ENCODE measurements at regions of chr21 and their contacts with region 1.

Region 1: GRCh38 chr21:25561668-25562641 is 45.3 kb downstream of the MRPL39 start:
- DNase-seq: peak; percentile 82
- H3K4me3 ChIP-seq: peak overlapping the region; percentile 62 to 97 (median 96)
- H3K27ac ChIP-seq: peak overlapping the region; percentile 89
- H3K4me1 ChIP-seq: peaks cover 27% of the 10 kb centered on the region
- H3K27me3 ChIP-seq: no peaks in the 10 kb centered on the region
- CTCF ChIP-seq: peak in 1 of 2 donors; percentile 36
- POLR2A ChIP-seq: peak; percentile 82

Region 2: GRCh38 chr21:24988941-24989340 is 573.0 kb before region 1 on chr21:
- CTCF ChIA-PET with region 1: no interaction called
- POLR2A ChIA-PET with region 1: no interaction called
- dilution Hi-C with region 1: no loop called
- intact Hi-C with region 1: no loop called
- DNase-seq: no peak
- H3K4me3 ChIP-seq: no peak overlapping the region
- H3K27ac ChIP-seq: no peak overlapping the region
- H3K4me1 ChIP-seq: no peaks in the 10 kb centered on the region
- H3K27me3 ChIP-seq: no peaks in the 10 kb centered on the region
- CTCF ChIP-seq: no peak
- POLR2A ChIP-seq: no peak

Region 3: DNA sequence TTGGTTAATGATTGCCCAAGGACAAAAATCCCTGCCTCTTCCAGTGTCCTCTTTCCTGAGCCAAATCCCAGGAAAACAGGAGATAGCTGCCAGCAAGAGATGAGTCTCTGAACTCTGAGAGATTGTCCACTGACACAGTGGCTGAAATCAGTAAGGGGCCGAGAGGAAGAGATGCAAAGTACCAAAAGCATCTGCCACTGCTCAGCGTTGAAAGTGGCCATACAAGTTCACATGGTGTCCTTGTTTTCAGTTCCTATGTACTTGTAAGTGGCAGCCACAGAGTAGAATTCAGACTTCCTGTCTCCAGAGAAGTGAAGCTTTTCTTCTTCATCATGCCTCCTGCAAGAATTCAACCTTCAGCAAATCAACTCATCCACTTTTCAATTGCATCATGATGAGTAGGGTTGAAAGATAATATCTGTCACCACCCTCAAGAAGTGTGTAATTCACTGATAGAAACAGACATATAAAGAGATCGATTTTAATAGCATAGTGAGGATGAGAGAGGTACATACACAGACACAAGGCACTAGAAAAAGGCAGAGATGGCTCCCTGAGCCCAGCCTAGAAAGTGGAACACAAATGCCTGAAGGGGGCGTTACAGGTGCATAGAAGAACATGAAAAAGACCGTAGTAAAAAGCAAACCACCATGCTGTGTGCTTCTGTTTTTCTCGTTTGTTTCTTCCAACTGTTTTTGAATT is 140.5 kb before region 1 on chr21:
- CTCF ChIA-PET with region 1: interaction called, 3 read pairs
- POLR2A ChIA-PET with region 1: no interaction called
- dilution Hi-C with region 1: no loop called
- intact Hi-C with region 1: loop called (anchors 1 kb)
- DNase-seq: peak; percentile 60
- H3K4me3 ChIP-seq: no peak overlapping the region
- H3K27ac ChIP-seq: no peak overlapping the region
- H3K4me1 ChIP-seq: no peaks in the 10 kb centered on the region
- H3K27me3 ChIP-seq: no peaks in the 10 kb centered on the region
- CTCF ChIP-seq: peak; percentile 29 to 59
- POLR2A ChIP-seq: no peak

Region 4: GRCh38 chr21:25457411-25457810 is 104.5 kb before region 1 on chr21:
- CTCF ChIA-PET with region 1: no interaction called
- POLR2A ChIA-PET with region 1: no interaction called
- dilution Hi-C with region 1: no loop called
- intact Hi-C with region 1: loop called (anchors 2 kb)
- DNase-seq: peak; percentile 81
- H3K4me3 ChIP-seq: peak overlapping the region in 1 of 3 experiments; percentile 33
- H3K27ac ChIP-seq: peak overlapping the region; percentile 18
- H3K4me1 ChIP-seq: peaks cover 6% of the 10 kb centered on the region
- H3K27me3 ChIP-seq: no peaks in the 10 kb centered on the region
- CTCF ChIP-seq: no peak
- POLR2A ChIP-seq: no peak

Region 5: DNA sequence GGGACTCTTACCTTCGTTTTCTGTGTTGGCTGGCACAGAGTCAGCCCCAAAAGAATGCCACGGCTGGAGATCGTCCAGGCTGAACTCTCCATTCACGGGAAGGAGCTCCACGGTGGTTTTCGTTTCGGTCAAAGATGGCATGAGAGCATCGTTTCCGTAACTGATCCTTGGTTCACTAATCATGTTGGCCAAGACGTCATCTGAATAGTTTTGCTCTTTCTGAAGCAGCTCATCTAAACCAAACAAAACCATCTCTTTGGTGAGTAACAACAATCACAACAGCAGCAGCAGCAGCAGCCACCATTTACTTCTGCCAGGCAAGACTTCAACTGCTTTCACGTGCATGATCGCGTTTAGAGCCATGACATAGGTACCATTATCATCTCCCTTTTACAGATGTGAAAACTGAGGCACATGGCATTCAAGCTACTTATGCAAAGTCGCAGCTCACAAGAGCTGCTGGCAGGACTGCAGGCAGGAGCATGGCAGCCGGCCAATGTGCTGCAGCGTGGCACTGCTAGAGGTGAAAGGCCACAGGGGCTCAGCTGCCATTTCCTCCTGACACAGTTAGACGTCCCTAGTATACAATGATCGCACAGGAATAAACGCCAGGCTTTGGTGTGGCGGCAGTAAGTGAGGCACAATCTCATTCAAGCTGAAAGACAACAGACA is 349.9 kb after region 1 on chr21:
- CTCF ChIA-PET with region 1: no interaction called
- POLR2A ChIA-PET with region 1: no interaction called
- dilution Hi-C with region 1: no loop called
- intact Hi-C with region 1: no loop called
- DNase-seq: peak; percentile 69
- H3K4me3 ChIP-seq: no peak overlapping the region
- H3K27ac ChIP-seq: no peak overlapping the region
- H3K4me1 ChIP-seq: peaks cover 34% of the 10 kb centered on the region
- H3K27me3 ChIP-seq: no peaks in the 10 kb centered on the region
- CTCF ChIP-seq: no peak
- POLR2A ChIP-seq: no peak

Region 6: GRCh38 chr21:26320596-26320995 is 758.6 kb after region 1 on chr21:
- CTCF ChIA-PET with region 1: no interaction called
- POLR2A ChIA-PET with region 1: no interaction called
- dilution Hi-C with region 1: no loop called
- intact Hi-C with region 1: no loop called
- DNase-seq: no peak
- H3K4me3 ChIP-seq: no peak overlapping the region
- H3K27ac ChIP-seq: no peak overlapping the region
- H3K4me1 ChIP-seq: no peaks in the 10 kb centered on the region
- H3K27me3 ChIP-seq: no peaks in the 10 kb centered on the region
- CTCF ChIP-seq: no peak
- POLR2A ChIP-seq: no peak